ENCODE measurements at regions of chr13 and their contacts with region 1.

Region 1: GRCh38 chr13:112066624-112067004 is 335 bp upstream of the SOX1 start:
- ATAC-seq: peak in 6 of 8 experiments; percentile 81 to 88 (median 84)
- H3K4me3 ChIP-seq: peak overlapping the region; percentile 34 to 49 (median 46)
- H3K27ac ChIP-seq: peak overlapping the region in 1 of 2 donors; percentile 60
- H3K4me1 ChIP-seq: peaks cover 0 to 23% of the 10 kb centered on the region in 2 donors

Region 2: DNA sequence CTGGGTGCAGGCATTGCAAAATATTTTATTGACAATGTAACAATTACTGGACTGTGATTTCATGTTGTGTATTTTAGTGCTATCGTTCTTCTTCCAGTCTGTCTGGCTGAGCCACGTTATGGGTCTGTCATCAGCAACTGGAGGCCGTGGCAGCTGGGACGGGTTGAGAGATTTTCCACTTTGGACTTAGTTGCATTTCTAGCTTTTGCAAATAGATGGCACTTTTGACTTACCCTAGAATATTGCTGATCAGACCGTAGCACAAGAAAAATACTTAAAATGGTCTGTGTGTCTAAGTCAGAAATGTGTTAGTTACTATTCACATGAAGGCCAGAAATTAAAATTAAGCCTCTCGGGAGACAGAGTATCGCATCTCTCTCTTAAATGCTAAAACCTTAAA is 535.1 kb before region 1 on chr13:
- in situ Hi-C with region 1: loop called in 3 of 9 experiments (anchors 25 kb)
- ATAC-seq: peak in 6 of 8 experiments; percentile 9 to 72 (median 67)
- H3K4me3 ChIP-seq: no peak overlapping the region
- H3K27ac ChIP-seq: no peak overlapping the region
- H3K4me1 ChIP-seq: peaks cover 9 to 41% of the 10 kb centered on the region in 2 donors

Region 3: GRCh38 chr13:112161521-112162301 is 95.1 kb after region 1 on chr13:
- in situ Hi-C with region 1: loop called in 1 of 9 experiments (anchors 25 kb)
- ATAC-seq: peak in 5 of 8 experiments; percentile 64 to 84 (median 72)
- H3K4me3 ChIP-seq: peak overlapping the region in 3 of 5 donors; percentile 4 to 8 (median 4)
- H3K27ac ChIP-seq: peak overlapping the region; percentile 32 to 87
- H3K4me1 ChIP-seq: peaks cover 31 to 43% of the 10 kb centered on the region in 2 donors

Region 4: GRCh38 chr13:112443995-112444860 is 377.6 kb after region 1 on chr13:
- in situ Hi-C with region 1: loop called in 4 of 9 experiments (anchors 25 kb)
- ATAC-seq: peak; percentile 72 to 97 (median 94)
- H3K4me3 ChIP-seq: no peak overlapping the region
- H3K27ac ChIP-seq: no peak overlapping the region
- H3K4me1 ChIP-seq: peaks cover 0 to 14% of the 10 kb centered on the region in 2 donors

Region 5: GRCh38 chr13:112740502-112741131 is 674.0 kb after region 1 on chr13:
- in situ Hi-C with region 1: no loop called
- ATAC-seq: peak in 4 of 8 experiments; percentile 4 to 87 (median 56)
- H3K4me3 ChIP-seq: no peak overlapping the region
- H3K27ac ChIP-seq: no peak overlapping the region
- H3K4me1 ChIP-seq: peaks cover 19% of the 10 kb centered on the region in 2 donors